Prostate gland (tissue), 2 donors: ENCODE measurements at regions of chr7 and their contacts with region 1.

Region 1: GRCh38 chr7:77657427-77658224 is 38.6 kb upstream of the RSBN1L start:
- DNase-seq: peak; percentile 49
- H3K4me3 ChIP-seq: no peak overlapping the region
- H3K27ac ChIP-seq: no peak overlapping the region
- H3K4me1 ChIP-seq: no peaks in the 10 kb centered on the region
- H3K27me3 ChIP-seq: no peaks in the 10 kb centered on the region
- CTCF ChIP-seq: peak in 3 of 4 experiments; percentile 26 to 68 (median 65)
- POLR2A ChIP-seq: no peak

Region 2: GRCh38 chr7:77222065-77222464 is 435.6 kb before region 1 on chr7:
- intact Hi-C with region 1: no loop called
- DNase-seq: no peak
- H3K4me3 ChIP-seq: no peak overlapping the region
- H3K27ac ChIP-seq: no peak overlapping the region
- H3K4me1 ChIP-seq: no peaks in the 10 kb centered on the region
- H3K27me3 ChIP-seq: no peaks in the 10 kb centered on the region
- CTCF ChIP-seq: no peak
- POLR2A ChIP-seq: no peak

Region 3: DNA sequence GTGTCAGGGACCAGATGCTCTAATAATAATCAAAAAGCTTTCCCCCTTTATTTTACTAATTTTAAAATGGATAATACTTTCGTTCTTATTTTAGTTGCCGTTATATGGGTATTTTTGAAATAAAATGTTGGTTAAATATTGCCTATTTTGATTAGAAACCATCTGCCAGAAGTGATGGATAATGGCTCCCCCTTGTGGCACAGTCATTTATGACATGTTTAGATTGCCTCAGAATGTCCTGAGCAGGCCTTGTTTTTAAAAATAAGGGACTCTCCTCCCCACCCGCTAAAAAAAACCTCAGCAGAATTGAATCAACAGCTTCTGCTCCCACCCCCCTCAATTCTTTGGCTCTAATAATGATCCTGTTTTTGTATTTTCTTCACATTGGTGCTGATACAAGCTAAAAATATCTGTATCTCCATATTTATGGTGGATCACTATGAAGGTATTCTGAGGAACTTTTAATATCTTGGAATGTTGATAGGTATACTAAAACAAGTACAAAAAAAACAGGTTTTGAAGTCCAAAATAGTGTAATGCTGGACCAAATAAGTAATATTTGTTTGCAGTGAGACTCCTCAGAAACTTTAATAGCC is 101.8 kb after region 1 on chr7:
- intact Hi-C with region 1: loop called (anchors 5 kb)
- DNase-seq: peak; percentile 70
- H3K4me3 ChIP-seq: no peak overlapping the region
- H3K27ac ChIP-seq: no peak overlapping the region
- H3K4me1 ChIP-seq: no peaks in the 10 kb centered on the region
- H3K27me3 ChIP-seq: no peaks in the 10 kb centered on the region
- CTCF ChIP-seq: peak; percentile 67 to 95 (median 82)
- POLR2A ChIP-seq: no peak

Region 4: DNA sequence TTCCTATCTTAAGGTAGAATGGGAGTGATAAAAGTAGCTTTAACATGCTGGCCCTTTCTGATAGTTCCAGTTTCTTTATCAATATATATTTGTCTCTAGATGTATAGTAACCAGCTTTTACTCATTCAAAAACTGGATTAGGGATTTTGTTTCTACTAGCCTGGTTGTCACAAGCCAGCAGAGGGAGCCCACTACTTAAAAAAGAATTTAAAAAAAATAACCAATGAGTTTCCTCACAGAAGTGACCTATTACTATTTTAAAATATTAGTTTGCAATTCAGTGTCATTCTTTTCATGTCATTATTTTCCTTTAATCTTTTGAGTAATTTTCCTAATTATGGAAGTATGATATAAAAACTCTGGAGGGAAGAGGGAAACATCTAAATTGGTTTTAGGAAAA is 283.0 kb after region 1 on chr7:
- intact Hi-C with region 1: loop called (anchors 10 kb)
- DNase-seq: peak; percentile 12
- H3K4me3 ChIP-seq: no peak overlapping the region
- H3K27ac ChIP-seq: no peak overlapping the region
- H3K4me1 ChIP-seq: no peaks in the 10 kb centered on the region
- H3K27me3 ChIP-seq: no peaks in the 10 kb centered on the region
- CTCF ChIP-seq: peak in 3 of 4 experiments; percentile 40 to 66 (median 61)
- POLR2A ChIP-seq: no peak